ENCODE measurements at regions of chr7 and their contacts with region 1.

Region 1: DNA sequence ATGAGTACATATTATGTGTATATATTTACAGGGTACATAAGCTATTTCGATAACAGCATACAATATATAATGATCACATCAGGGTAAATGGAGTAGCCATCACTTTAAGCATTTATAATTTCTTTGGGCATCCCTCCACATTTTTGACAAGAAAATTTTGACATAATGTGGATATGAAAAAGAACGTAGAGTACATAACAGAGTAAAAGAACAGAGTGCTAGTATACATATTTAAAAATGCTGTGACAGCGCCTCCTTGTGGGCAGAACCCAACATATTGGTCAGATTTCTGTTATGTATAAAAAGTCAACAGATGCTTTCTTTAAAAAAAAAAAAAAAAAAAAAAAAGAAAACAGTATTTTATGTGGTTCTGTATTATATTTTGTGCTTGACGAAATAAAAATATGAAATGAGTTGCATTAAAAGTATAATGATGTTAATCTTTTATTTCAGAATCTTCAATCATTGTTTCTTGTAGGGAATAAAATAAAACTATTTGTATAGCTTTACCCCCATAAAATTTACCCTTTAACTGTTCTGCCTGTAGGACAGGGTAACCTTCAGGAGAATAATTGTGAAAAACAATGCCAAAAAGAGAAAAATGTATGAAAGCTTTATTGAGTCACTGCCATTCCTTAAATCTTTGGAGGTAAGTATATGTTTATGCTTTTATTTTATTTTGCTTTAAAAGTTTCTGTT is 18.3 kb upstream of the HBP1 start:
- DNase-seq: peak; percentile 83
- ATAC-seq: peak; percentile 79
- H3K4me3 ChIP-seq: no peak overlapping the region
- H3K4me3 Mint-ChIP-seq: no peak overlapping the region
- H3K27ac ChIP-seq: no peak overlapping the region
- H3K27ac Mint-ChIP-seq: no peak overlapping the region
- H3K4me1 ChIP-seq: no peaks in the 10 kb centered on the region
- H3K4me1 Mint-ChIP-seq: peaks cover 4% of the 10 kb centered on the region
- H3K27me3 ChIP-seq: no peaks in the 10 kb centered on the region
- H3K27me3 Mint-ChIP-seq: no peaks in the 10 kb centered on the region
- CTCF ChIP-seq: peak; percentile 86

Region 2: DNA sequence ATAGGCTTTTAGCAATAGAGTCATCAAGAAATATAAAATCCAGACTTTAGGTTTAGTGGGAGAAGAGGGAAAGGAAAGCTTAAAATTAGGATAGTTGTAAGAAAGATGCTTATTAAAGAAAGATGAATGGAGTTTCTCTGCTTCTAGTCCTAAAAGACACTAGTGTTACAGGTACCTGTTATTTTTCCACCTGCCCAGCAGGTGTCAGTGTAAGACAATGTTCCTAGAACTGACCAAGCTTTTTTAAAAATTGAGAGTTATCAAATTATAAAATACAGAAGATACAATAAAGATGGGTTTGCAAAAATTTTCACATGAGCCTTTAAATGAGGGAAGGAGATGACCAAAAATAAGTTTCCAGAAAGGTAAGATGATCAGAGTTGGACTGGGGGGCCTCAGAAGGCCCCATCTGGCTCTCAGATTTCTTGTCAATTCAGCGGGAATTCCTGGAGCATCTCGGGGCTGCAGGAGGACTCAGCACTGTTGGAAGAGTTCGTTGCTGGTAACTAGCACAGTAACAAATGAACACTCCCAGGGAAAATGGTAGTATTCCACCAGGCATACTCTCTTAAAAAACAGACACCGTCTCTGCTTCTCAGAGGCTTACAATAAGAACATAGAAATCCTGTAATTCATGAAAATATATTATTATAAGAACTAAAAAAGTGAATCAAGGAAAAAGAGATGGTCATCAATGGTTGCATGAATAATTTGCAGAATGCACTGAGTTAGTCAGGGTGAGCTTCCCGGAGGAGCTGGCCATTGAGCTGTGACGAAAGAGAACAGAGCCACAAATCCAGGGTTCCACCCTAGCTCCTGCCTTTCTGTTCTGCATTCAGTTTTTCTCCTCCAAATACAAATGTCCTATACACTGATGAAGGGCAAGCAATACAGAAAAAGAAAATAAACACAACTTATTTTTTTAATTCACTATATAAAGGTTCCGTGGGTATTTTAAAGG is 357.2 kb before region 1 on chr7:
- CTCF ChIA-PET with region 1: interaction called, 241 read pairs
- POLR2A ChIA-PET with region 1: no interaction called
- intact Hi-C with region 1: no loop called
- DNase-seq: peak; percentile 72
- ATAC-seq: peak; percentile 58
- H3K4me3 ChIP-seq: no peak overlapping the region
- H3K4me3 Mint-ChIP-seq: no peak overlapping the region
- H3K27ac ChIP-seq: no peak overlapping the region
- H3K27ac Mint-ChIP-seq: no peak overlapping the region
- H3K4me1 ChIP-seq: no peaks in the 10 kb centered on the region
- H3K4me1 Mint-ChIP-seq: no peaks in the 10 kb centered on the region
- H3K27me3 ChIP-seq: no peaks in the 10 kb centered on the region
- H3K27me3 Mint-ChIP-seq: no peaks in the 10 kb centered on the region
- CTCF ChIP-seq: peak; percentile 93

Region 3: DNA sequence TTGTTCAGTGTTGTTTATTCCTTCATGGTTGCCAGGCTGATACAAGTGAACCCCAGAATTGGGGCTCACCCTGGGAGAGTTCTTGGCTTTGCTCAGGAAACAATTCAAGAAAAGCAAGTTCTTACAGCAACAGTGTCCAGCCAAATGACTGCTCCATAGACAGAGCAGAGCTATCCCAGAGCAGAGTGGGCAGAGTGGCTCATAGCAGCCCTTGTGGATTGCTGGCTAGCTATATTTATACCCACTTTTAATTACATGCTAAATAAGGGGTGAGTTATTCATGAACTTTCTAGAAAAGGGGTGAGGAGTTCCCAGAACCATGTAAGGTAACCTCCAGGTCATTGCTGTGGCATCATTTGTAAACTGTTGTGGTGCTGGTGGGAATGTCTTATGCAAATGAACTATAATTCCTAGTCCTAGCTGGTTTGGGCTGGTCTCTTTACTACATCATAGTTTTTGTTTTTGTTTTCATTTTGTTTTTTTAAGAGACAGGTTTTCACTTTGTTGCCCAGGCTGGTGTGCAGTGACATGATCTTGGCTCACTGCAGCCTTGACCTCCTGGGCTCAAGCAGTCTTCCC is 41.6 kb before region 1 on chr7:
- CTCF ChIA-PET with region 1: no interaction called
- POLR2A ChIA-PET with region 1: no interaction called
- intact Hi-C with region 1: no loop called
- DNase-seq: no peak
- ATAC-seq: no peak
- H3K4me3 ChIP-seq: no peak overlapping the region
- H3K4me3 Mint-ChIP-seq: no peak overlapping the region
- H3K27ac ChIP-seq: no peak overlapping the region
- H3K27ac Mint-ChIP-seq: no peak overlapping the region
- H3K4me1 ChIP-seq: no peaks in the 10 kb centered on the region
- H3K4me1 Mint-ChIP-seq: no peaks in the 10 kb centered on the region
- H3K27me3 ChIP-seq: no peaks in the 10 kb centered on the region
- H3K27me3 Mint-ChIP-seq: no peaks in the 10 kb centered on the region
- CTCF ChIP-seq: no peak

Region 4: DNA sequence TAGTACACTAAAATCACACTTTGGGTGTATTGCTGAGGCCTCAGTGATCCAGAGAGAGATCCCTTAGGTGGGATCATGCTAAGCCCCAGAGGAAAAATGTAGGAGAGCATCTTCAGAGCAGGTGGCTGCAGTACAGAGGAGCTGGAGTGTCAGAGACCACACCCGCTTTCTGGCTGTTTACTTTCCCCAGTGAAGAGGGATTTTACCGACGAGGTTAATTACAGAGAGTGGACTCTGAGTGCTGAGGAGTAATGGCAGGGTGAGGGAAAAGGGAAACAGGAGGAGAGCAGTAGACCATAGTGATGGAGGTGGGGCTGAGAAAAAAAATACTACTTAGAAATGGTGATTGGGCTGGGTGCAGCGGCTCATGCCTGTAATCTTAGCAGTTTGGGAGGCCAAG is 25.1 kb before region 1 on chr7:
- CTCF ChIA-PET with region 1: interaction called, 51 read pairs
- POLR2A ChIA-PET with region 1: interaction called, 3 read pairs
- intact Hi-C with region 1: no loop called
- DNase-seq: no peak
- ATAC-seq: no peak
- H3K4me3 ChIP-seq: no peak overlapping the region
- H3K4me3 Mint-ChIP-seq: peak overlapping the region; percentile 82
- H3K27ac ChIP-seq: peak overlapping the region in 1 of 2 donors; percentile 88
- H3K27ac Mint-ChIP-seq: peak overlapping the region; percentile 82
- H3K4me1 ChIP-seq: peaks cover 13 to 19% of the 10 kb centered on the region in 2 donors
- H3K4me1 Mint-ChIP-seq: peaks cover 13% of the 10 kb centered on the region
- H3K27me3 ChIP-seq: no peaks in the 10 kb centered on the region
- H3K27me3 Mint-ChIP-seq: no peaks in the 10 kb centered on the region
- CTCF ChIP-seq: no peak

Region 5: GRCh38 chr7:107138696-107139420 is 11.7 kb before region 1 on chr7:
- CTCF ChIA-PET with region 1: interaction called, 51 read pairs
- POLR2A ChIA-PET with region 1: no interaction called
- intact Hi-C with region 1: no loop called
- DNase-seq: no peak
- ATAC-seq: no peak
- H3K4me3 ChIP-seq: no peak overlapping the region
- H3K4me3 Mint-ChIP-seq: no peak overlapping the region
- H3K27ac ChIP-seq: no peak overlapping the region
- H3K27ac Mint-ChIP-seq: no peak overlapping the region
- H3K4me1 ChIP-seq: no peaks in the 10 kb centered on the region
- H3K4me1 Mint-ChIP-seq: no peaks in the 10 kb centered on the region
- H3K27me3 ChIP-seq: no peaks in the 10 kb centered on the region
- H3K27me3 Mint-ChIP-seq: peaks cover 5% of the 10 kb centered on the region
- CTCF ChIP-seq: no peak

Region 6: DNA sequence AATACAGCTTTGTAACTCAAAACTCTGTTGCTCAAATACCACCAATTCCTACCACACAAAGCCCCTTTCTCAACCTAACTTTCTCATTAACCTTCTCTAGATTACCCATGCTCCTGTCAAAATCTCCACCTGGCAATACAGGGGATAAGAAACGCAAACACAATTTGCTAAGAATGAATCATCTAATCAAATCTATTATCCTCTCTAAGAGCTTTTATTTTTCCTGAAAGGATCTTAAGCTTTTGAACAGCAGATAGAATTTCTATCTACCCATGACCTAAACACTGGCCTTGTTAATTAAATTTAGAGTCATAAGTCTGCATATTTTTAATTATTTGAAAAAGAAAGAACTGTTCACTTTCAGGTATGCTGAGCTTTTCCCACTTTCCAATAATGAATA is 116.6 kb after region 1 on chr7:
- CTCF ChIA-PET with region 1: no interaction called
- POLR2A ChIA-PET with region 1: no interaction called
- intact Hi-C with region 1: no loop called
- DNase-seq: no peak
- ATAC-seq: no peak
- H3K4me3 ChIP-seq: no peak overlapping the region
- H3K4me3 Mint-ChIP-seq: no peak overlapping the region
- H3K27ac ChIP-seq: no peak overlapping the region
- H3K27ac Mint-ChIP-seq: no peak overlapping the region
- H3K4me1 ChIP-seq: no peaks in the 10 kb centered on the region
- H3K4me1 Mint-ChIP-seq: no peaks in the 10 kb centered on the region
- H3K27me3 ChIP-seq: no peaks in the 10 kb centered on the region
- H3K27me3 Mint-ChIP-seq: no peaks in the 10 kb centered on the region
- CTCF ChIP-seq: no peak

Region 7: DNA sequence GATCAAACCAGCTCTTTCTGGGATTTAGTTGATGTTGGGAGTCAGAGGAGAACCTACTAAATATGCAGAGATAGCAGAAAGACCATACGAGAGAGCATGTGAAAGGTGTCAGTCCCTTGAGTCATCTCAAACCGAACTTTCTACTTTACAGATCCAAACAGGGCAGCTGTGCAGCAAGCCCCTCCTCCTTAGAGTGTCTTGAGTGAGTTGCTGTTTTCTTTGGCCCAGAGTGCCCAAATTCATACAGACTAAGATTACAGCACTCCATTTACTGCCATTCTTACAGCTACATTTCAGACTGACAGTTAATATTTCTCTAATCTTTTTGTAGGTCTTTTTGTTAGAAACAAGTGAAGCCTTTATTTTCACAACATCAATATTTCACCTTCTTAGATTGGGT is 1252.3 kb after region 1 on chr7:
- CTCF ChIA-PET with region 1: no interaction called
- POLR2A ChIA-PET with region 1: no interaction called
- intact Hi-C with region 1: no loop called
- DNase-seq: no peak
- ATAC-seq: peak; percentile 24
- H3K4me3 ChIP-seq: no peak overlapping the region
- H3K4me3 Mint-ChIP-seq: no peak overlapping the region
- H3K27ac ChIP-seq: no peak overlapping the region
- H3K27ac Mint-ChIP-seq: no peak overlapping the region
- H3K4me1 ChIP-seq: peaks cover 0 to 5% of the 10 kb centered on the region in 2 donors
- H3K4me1 Mint-ChIP-seq: peaks cover 4% of the 10 kb centered on the region
- H3K27me3 ChIP-seq: peaks cover 0 to 7% (median 3%) of the 10 kb centered on the region in 4 experiments
- H3K27me3 Mint-ChIP-seq: peaks cover 12% of the 10 kb centered on the region
- CTCF ChIP-seq: no peak

Measured in B cell (primary cell).